CD4-positive, alpha-beta memory T cell (primary cell): ENCODE measurements at regions of chr5 and their contacts with region 1.

Region 1: DNA sequence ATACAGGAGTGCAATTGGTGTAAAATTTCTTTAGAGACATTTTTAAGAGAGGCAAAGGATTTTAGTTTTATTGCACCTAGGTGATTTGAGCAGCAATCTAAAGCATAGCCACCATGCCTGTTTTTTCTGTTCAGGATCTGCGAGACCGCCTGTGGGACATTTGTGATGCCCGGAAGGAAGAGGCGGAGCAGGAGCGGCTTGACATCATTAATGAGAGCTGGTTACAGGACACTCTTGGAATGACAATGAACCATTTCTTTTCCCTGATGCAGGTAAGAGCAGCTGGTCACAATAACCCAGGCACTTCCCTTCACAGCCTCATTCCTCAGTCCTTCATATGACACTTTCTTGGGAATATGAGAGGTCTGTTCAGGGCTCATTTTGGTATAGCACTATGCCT is 103.2 kb upstream of the IL7R start:
- DNase-seq: no peak
- H3K4me3 ChIP-seq: no peak overlapping the region
- H3K4me3 Mint-ChIP-seq: no peak overlapping the region
- H3K27ac ChIP-seq: no peak overlapping the region
- H3K27ac Mint-ChIP-seq: peak overlapping the region in 1 of 7 donors; percentile 46
- H3K4me1 ChIP-seq: no peaks in the 10 kb centered on the region
- H3K4me1 Mint-ChIP-seq: peaks cover 11 to 22% (median 19%) of the 10 kb centered on the region in 4 donors
- H3K27me3 ChIP-seq: no peaks in the 10 kb centered on the region
- H3K27me3 Mint-ChIP-seq: no peaks in the 10 kb centered on the region

Region 2: GRCh38 chr5:35707659-35708058 is 45.8 kb before region 1 on chr5:
- CTCF ChIA-PET with region 1: no interaction called
- POLR2A ChIA-PET with region 1: no interaction called
- intact Hi-C with region 1: loop called (anchors 10 kb)
- DNase-seq: no peak
- H3K4me3 ChIP-seq: no peak overlapping the region
- H3K4me3 Mint-ChIP-seq: no peak overlapping the region
- H3K27ac ChIP-seq: no peak overlapping the region
- H3K27ac Mint-ChIP-seq: peak overlapping the region in 1 of 7 donors; percentile 8
- H3K4me1 ChIP-seq: no peaks in the 10 kb centered on the region
- H3K4me1 Mint-ChIP-seq: peaks cover 4 to 16% (median 9%) of the 10 kb centered on the region in 4 donors
- H3K27me3 ChIP-seq: no peaks in the 10 kb centered on the region
- H3K27me3 Mint-ChIP-seq: no peaks in the 10 kb centered on the region